PC-9 (cell line): ENCODE measurements at regions of chr17 and their contacts with region 1.

Region 1: GRCh38 chr17:75034236-75034908 is 12.4 kb downstream of the ATP5PD start:
- DNase-seq: peak; percentile 88
- H3K4me3 ChIP-seq: peak overlapping the region; percentile 98
- H3K27ac ChIP-seq: peak overlapping the region; percentile 90
- H3K4me1 ChIP-seq: peaks cover 30% of the 10 kb centered on the region
- H3K27me3 ChIP-seq: no peaks in the 10 kb centered on the region
- CTCF ChIP-seq: peak; percentile 45; the same call in 1 of the 2 replicates

Region 2: GRCh38 chr17:74981979-74982662 is 52.3 kb before region 1 on chr17:
- CTCF ChIA-PET with region 1: no interaction called
- POLR2A ChIA-PET with region 1: interaction called, 5 read pairs
- intact Hi-C with region 1: loop called (anchors 2 kb)
- DNase-seq: peak; percentile 51 to 67
- H3K4me3 ChIP-seq: peak overlapping the region; percentile 64
- H3K27ac ChIP-seq: no peak overlapping the region
- H3K4me1 ChIP-seq: peaks cover 18% of the 10 kb centered on the region
- H3K27me3 ChIP-seq: no peaks in the 10 kb centered on the region
- CTCF ChIP-seq: no peak

Region 3: DNA sequence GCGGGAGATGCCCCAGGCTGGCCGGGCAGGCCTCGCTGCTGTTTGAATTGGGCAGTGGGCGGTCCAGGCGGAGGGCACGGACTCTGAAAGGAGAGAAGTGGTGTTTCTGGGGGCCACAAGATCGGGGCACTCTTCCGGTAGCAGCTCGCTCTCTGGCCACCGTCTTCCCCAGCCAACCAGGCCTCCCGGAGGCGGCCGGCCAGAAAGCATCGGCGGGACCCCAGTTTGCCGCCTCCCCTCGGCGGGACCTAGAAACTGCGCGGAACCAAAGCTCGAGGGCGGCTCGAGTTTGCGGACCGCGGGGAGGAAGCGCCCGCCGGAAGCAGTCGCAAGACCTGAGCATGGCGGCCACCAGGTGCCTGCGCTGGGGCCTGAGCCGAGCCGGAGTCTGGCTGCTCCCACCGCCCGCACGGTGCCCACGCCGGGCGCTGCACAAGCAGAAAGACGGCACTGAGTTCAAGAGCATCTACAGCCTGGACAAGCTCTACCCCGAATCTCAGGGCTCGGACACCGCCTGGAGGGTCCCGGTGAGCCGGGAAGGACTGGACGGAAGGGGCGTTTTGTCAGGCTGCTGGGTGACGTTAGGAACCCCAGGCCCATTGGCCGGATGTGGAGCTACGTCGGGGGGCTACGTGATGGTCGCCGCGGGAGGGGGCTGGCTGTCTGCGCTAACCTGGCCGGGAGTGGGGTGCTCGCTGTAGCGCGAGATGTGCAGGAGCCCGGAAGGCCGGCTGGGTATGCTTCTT is 21.9 kb before region 1 on chr17 and contains the start of gene MRPL58:
- CTCF ChIA-PET with region 1: interaction called, 3 read pairs
- POLR2A ChIA-PET with region 1: interaction called, 6 read pairs
- intact Hi-C with region 1: loop called (anchors 1 kb)
- DNase-seq: peak; percentile 74 to 83
- H3K4me3 ChIP-seq: peak within 1 kb of the TSS; percentile 90
- H3K27ac ChIP-seq: peak within 1 kb of the TSS; percentile 43
- H3K4me1 ChIP-seq: peaks cover 31% of the 10 kb centered on the region
- H3K27me3 ChIP-seq: no peaks in the 10 kb centered on the region
- CTCF ChIP-seq: peak; percentile 70
- total RNA-seq, gene MRPL58: 42.8 and 48.4 TPM in 2 replicates

Region 4: DNA sequence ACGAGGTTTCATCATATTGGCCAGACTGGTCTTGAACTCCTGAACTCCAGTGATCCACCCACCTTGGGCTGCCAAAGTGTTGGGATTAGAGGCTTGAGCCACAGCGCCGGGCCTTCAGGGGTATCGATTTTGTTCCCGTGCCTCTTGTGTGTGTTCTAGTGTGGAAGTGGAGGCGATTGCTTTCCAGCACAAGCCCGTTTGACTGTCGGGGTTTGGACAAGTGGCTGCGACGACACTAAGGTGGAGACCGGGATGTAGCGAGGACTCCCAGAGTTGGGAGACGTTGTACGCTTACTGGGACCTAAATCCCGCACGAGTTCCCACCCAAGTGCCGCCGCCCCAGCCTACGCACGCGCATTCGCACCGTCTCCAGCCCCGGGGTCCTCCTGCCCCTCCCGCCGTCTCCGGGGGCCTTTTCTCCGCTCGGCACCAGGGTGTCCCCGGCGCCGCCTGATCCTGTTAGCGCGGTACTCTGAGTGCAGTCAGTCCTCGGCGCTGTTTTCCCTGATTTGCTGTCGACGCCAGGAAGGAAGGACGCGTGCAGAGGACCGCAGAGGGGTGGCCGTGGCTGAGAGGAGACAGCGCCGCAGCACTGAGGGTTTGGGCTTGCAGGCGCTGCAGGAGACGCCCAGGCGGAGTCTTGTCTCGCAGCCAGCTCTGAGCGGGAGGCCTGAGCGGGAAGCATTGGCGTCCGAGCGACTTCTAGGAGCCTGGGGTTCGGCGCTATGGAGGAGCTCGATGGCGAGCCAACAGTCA is 170.8 kb after region 1 on chr17 and contains the start of gene NUP85:
- CTCF ChIA-PET with region 1: no interaction called
- POLR2A ChIA-PET with region 1: no interaction called
- intact Hi-C with region 1: loop called (anchors 10 kb)
- DNase-seq: peak; percentile 90 to 96
- H3K4me3 ChIP-seq: peak within 1 kb of the TSS; percentile 93
- H3K27ac ChIP-seq: peak within 1 kb of the TSS; percentile 92
- H3K4me1 ChIP-seq: peaks cover 14% of the 10 kb centered on the region
- H3K27me3 ChIP-seq: no peaks in the 10 kb centered on the region
- CTCF ChIP-seq: no peak
- total RNA-seq, gene NUP85: 64.2 and 73.1 TPM in 2 replicates